HEK293 (cell line): ENCODE measurements at regions of chr14 and their contacts with region 1.

Region 1: DNA sequence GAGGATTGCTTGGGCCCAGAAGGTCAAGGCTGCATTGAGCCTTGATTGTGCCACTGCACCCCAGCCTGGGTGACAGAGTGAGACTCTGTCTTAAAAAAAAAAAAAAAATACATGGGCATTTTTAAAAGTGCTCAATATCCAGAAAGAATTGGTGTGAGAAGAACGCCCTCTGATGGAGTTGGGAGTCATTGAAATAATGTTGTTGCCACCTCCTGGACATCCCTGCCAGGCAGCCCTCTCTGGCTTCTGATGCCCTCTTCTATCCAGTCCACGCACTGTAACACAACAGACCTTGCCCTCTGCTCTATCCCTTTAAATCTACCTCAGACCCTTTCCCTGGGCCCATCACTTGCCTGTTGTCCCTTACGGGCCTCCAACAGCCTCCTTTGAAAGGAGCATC is 4.9 kb downstream of the PTGDR start:
- H3K4me3 ChIP-seq: no peak overlapping the region
- H3K27ac ChIP-seq: no peak overlapping the region
- H3K4me1 ChIP-seq: no peaks in the 10 kb centered on the region
- CTCF ChIP-seq: 0 out of 2 replicates have a peak, but pooled peaks have one; percentile 34

Region 2: DNA sequence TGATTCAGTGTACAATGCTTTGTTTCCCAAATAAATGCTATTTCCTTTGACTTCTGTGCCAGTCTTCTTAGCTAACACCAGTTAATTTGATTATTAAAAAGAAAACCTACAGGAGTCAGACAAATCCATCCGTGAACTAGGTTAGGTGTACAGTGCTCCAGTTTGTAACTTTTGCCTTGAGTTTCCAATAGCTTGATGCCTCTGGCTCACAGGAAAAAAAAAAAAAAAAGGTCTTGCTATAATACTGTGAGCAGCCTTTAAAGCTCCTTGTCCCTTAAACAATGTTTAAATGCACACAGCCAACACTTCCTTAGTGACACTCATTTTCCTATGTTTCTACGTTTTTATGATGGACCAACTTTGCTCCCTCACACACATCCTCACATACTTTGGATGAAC is 1104.2 kb before region 1 on chr14:
- CTCF ChIA-PET with region 1: interaction called, 11 read pairs
- POLR2A ChIA-PET with region 1: no interaction called
- H3K4me3 ChIP-seq: no peak overlapping the region
- H3K27ac ChIP-seq: no peak overlapping the region
- H3K4me1 ChIP-seq: no peaks in the 10 kb centered on the region
- CTCF ChIP-seq: no peak

Region 3: GRCh38 chr14:52052288-52052943 is 220.0 kb before region 1 on chr14:
- CTCF ChIA-PET with region 1: no interaction called
- POLR2A ChIA-PET with region 1: no interaction called
- H3K4me3 ChIP-seq: no peak overlapping the region
- H3K27ac ChIP-seq: no peak overlapping the region
- H3K4me1 ChIP-seq: no peaks in the 10 kb centered on the region
- CTCF ChIP-seq: no peak

Region 4: DNA sequence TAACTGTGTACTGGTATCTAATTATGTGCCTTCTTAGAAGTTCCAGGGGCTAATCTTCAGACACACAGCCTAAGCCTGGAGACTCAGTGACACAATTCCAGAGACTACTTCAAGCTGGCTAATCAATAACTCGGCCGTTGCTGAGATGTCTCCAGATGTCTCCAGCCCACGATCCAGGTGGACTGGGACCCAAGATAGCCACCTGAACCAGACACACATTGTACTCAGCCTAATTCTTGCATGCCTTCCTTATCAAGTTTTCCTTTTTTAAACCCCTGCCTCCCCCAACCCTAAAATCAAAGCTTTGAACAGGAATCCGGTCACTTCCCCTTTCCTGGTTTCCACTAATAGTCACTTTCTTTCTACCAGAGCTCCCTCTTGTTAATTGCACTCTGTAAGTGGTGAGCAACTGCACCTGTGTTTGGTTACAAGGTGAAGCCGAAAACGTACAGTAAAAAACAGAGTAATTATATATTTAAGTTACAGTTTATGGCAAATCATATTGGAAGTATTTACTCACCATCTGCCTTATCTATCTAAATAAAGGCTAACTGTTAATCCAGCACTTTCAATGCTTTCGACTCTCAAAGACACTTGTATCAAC is 44.7 kb before region 1 on chr14:
- CTCF ChIA-PET with region 1: no interaction called
- POLR2A ChIA-PET with region 1: no interaction called
- H3K4me3 ChIP-seq: no peak overlapping the region
- H3K27ac ChIP-seq: no peak overlapping the region
- H3K4me1 ChIP-seq: no peaks in the 10 kb centered on the region
- CTCF ChIP-seq: no peak

Region 5: GRCh38 chr14:52253503-52253902 is 18.9 kb before region 1 on chr14:
- CTCF ChIA-PET with region 1: no interaction called
- POLR2A ChIA-PET with region 1: no interaction called
- H3K4me3 ChIP-seq: no peak overlapping the region
- H3K27ac ChIP-seq: no peak overlapping the region
- H3K4me1 ChIP-seq: no peaks in the 10 kb centered on the region
- CTCF ChIP-seq: no peak